Sigmoid colon (tissue), 7 donors: ENCODE measurements at regions of chr4 and their contacts with region 1.

Region 1: GRCh38 chr4:170047771-170048354 is 21.7 kb upstream of the MFAP3L start:
- DNase-seq: no peak
- H3K4me3 ChIP-seq: no peak overlapping the region
- H3K27ac ChIP-seq: no peak overlapping the region
- H3K4me1 ChIP-seq: no peaks in the 10 kb centered on the region
- H3K27me3 ChIP-seq: no peaks in the 10 kb centered on the region
- CTCF ChIP-seq: peak; percentile 42 to 71 (median 65)
- EP300 ChIP-seq: no peak
- POLR2A ChIP-seq: no peak

Region 2: GRCh38 chr4:169311643-169312365 is 736.1 kb before region 1 on chr4:
- intact Hi-C with region 1: no loop called
- DNase-seq: no peak
- H3K4me3 ChIP-seq: no peak overlapping the region
- H3K27ac ChIP-seq: no peak overlapping the region
- H3K4me1 ChIP-seq: peaks cover 0 to 20% (median 13%) of the 10 kb centered on the region in 4 donors
- H3K27me3 ChIP-seq: no peaks in the 10 kb centered on the region
- CTCF ChIP-seq: peak in 2 of 4 experiments; percentile 26 to 50
- EP300 ChIP-seq: no peak
- POLR2A ChIP-seq: no peak

Region 3: DNA sequence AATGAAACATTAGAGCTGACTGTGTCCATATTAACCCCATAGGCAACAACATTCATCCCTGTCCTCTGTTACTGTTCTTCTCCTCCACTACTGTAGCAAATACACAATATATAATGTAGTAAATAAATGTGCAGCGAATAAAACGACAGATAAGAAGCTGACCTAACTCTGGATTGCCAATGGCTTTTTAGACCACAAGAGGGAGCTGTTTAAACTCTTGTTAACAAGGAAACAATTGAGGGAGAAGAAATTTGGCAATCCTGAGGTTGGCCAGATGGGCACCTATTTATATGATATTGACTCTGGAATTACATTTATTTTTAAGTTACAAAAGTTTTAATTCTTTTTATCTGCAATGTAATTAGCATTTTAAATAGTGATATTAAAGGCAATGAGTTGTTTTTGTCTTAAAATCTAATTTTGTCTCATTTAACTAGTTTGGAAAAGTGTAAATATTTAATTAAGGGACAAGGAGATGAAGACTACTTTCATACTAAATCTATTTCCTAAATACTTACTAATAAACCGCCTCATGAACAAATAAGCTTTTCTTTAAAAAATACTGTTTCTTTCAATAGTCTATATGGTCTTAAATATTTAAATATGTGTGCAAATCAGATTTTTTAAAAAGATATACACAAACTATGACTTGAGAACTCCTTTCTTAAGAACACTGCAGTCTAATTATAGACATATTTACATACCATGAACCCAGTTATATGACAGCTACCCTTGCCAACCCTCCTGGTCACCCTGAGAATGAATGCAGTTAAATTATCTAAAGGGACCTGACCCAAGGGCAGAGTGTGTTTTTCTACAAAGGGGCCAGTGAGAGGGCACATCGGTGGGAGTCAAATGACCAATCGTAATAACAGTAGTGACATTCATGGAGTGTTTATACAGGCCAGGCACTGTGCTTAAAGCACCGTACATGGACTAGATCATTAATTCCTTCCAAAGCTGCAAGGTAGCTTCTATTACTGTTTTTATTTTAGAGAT is 237.2 kb before region 1 on chr4:
- intact Hi-C with region 1: loop called (anchors 2 kb)
- DNase-seq: no peak
- H3K4me3 ChIP-seq: no peak overlapping the region
- H3K27ac ChIP-seq: no peak overlapping the region
- H3K4me1 ChIP-seq: no peaks in the 10 kb centered on the region
- H3K27me3 ChIP-seq: no peaks in the 10 kb centered on the region
- CTCF ChIP-seq: peak; percentile 59 to 78 (median 66)
- EP300 ChIP-seq: no peak
- POLR2A ChIP-seq: no peak